Activated T-helper 1 cell treated with anti-CD3 and anti-CD28 coated beads, Interleukin-12 subunit alpha, Interleukin-12 subunit beta, Interleukin-2, Interleukin-4 antibody, amounts not matched to agents 30 ng/mL and 10 ng/mL and 1 ng/mL, durations not matched to agents 14 hours and 24 hours and 36 hours (primary cell): ENCODE measurements at regions of chr11 and their contacts with region 1.

Region 1: DNA sequence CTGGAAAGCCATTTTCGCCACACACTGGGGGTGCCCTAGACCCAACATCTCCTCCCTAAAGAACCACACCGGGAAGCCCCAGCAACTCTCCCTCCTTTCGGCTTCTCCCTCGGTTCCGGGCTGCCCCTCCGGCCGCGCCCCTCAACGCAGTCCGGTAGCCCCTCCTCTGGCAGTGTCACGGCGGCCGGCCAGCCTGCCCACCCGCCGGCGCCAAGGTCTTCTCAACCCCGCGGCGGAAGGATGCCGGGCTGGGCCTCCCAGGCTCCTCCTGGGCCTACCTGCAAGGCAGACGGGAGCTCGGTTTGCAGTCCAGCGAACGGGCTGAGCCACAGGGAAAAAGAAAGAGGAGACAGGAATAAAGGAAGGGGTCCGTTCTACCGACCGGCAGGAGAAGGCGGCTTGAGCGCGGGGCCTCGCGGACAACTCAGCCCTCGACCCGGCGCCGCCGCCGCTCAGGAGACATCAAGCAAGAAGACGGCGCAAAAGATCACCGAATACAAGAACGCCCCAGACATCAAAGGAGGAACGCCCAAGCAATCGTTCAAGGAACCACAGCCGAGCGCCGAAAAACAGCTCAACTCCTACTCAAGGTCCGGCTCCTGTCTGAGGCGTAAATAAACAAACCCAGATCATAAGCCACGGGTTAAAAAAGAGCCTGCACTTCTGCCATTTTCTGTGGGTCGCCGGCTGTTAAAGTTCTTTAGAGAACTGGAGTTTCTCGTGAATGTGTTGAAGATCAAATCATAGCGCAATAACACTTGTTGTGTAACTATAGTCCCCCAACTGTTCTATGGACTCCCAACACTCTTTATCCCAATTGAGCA is at the start of gene AMBRA1:
- DNase-seq: peak; percentile 81
- H3K4me3 Mint-ChIP-seq: peak within 1 kb of the TSS; percentile 93
- H3K27ac Mint-ChIP-seq: peak within 1 kb of the TSS; percentile 87
- H3K4me1 Mint-ChIP-seq: peaks cover 44% of the 10 kb centered on the region
- H3K27me3 Mint-ChIP-seq: no peaks in the 10 kb centered on the region
- total RNA-seq, gene AMBRA1: 35.7 and 37.9 TPM in 2 replicates

Region 2: GRCh38 chr11:46554205-46555055 is 39.3 kb before region 1 on chr11:
- intact Hi-C with region 1: loop called (anchors 1 kb)
- DNase-seq: no peak
- H3K4me3 Mint-ChIP-seq: peak overlapping the region; percentile 13
- H3K27ac Mint-ChIP-seq: peak overlapping the region; percentile 55
- H3K4me1 Mint-ChIP-seq: peaks cover 44% of the 10 kb centered on the region
- H3K27me3 Mint-ChIP-seq: no peaks in the 10 kb centered on the region

Region 3: DNA sequence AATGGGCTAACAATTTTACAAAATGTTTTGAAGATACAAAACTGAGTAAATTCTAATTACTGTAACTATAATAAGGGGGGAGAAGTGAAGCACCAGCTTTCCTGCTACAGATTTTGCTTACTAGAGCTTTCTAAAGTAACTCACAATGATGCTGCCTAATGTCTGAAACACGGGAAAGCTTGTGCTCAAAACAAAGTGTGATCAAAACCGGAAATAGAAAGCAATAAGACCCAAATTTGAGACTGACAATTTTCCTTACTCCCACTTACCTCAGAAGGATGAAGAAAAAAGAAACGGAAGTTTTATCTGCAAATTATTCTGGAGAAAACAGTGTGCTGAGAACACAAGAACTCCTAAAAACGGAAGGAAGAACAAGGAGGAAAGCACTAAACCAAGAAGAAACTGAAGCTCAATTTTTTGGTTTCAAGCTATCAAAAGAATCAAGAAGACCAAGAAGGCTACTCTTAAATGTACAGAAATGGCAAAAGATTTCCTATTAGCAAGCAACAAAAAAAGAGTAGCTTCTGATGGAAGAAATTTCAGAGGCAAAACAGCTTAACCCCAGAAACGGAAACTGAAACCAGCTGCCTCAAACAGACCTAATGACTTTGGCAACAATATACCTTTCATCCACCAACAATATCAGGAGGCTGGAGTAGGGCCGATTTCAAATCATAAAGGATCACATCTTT is 33.3 kb before region 1 on chr11:
- intact Hi-C with region 1: loop called (anchors 1 kb)
- DNase-seq: peak; percentile 16
- H3K4me3 Mint-ChIP-seq: peak overlapping the region; percentile 85
- H3K27ac Mint-ChIP-seq: peak overlapping the region; percentile 76
- H3K4me1 Mint-ChIP-seq: peaks cover 59% of the 10 kb centered on the region
- H3K27me3 Mint-ChIP-seq: no peaks in the 10 kb centered on the region

Region 4: GRCh38 chr11:46865340-46865739 is 271.6 kb after region 1 on chr11:
- intact Hi-C with region 1: no loop called
- DNase-seq: no peak
- H3K4me3 Mint-ChIP-seq: no peak overlapping the region
- H3K27ac Mint-ChIP-seq: no peak overlapping the region
- H3K4me1 Mint-ChIP-seq: no peaks in the 10 kb centered on the region
- H3K27me3 Mint-ChIP-seq: peaks cover 26% of the 10 kb centered on the region